Right ventricle myocardium inferior (tissue), 1 donor: ENCODE measurements at regions of chr2 and their contacts with region 1.

Region 1: GRCh38 chr2:47906157-47907038 is at the start of gene FBXO11:
- DNase-seq: peak; percentile 97
- ATAC-seq: peak; percentile 97
- total RNA-seq, gene FBXO11: 35.6 TPM

Region 2: DNA sequence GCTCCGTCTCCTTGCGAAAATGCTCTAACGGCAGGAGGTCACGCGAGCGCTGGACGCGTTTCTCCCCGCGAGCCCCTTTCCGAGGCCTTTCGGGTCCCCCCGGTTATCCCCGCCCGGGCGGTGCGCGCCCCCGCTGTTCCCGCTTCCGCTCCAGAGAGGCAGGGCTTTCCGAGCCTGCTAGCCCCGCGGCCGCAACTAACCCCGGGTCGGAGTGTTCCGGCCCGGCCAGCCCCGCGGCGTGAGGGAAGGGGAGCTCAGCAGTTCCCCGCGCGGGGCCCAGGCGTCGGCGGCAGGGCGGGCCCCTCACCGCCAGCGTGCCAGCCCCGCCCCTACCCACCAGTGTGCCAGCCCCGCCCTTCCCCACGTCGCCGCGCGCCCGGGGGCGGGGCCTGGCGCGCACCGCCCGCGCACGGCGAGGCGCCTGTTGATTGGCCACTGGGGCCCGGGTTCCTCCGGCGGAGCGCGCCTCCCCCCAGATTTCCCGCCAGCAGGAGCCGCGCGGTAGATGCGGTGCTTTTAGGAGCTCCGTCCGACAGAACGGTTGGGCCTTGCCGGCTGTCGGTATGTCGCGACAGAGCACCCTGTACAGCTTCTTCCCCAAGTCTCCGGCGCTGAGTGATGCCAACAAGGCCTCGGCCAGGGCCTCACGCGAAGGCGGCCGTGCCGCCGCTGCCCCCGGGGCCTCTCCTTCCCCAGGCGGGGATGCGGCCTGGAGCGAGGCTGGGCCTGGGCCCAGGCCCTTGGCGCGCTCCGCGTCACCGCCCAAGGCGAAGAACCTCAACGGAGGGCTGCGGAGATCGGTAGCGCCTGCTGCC is 123.5 kb before region 1 on chr2 and contains the start of gene MSH6:
- intact Hi-C with region 1: loop called (anchors 2 kb)
- DNase-seq: peak; percentile 94
- ATAC-seq: peak; percentile 98
- total RNA-seq, gene MSH6: 25.4 TPM

Region 3: DNA sequence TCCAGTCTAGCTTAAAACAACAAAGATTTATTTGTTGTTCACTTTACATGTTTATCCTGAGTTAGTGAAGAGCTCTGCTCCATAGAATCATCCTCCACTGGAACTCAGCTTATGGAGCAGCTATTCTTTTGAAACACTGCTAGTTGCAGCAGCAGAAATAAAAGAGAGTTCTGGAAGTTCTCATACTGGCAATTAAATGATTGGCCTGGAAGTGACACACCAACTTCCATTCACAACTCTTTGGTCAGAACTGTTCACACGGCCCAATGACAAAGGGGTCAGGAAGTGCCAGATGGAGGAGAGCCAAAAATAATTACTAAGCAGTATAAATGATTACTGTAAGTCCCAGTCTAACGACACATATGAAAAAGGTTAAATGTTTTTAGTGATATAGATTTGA is 39.2 kb before region 1 on chr2:
- intact Hi-C with region 1: loop called (anchors 5 kb)
- DNase-seq: no peak
- ATAC-seq: peak; percentile 88

Region 4: DNA sequence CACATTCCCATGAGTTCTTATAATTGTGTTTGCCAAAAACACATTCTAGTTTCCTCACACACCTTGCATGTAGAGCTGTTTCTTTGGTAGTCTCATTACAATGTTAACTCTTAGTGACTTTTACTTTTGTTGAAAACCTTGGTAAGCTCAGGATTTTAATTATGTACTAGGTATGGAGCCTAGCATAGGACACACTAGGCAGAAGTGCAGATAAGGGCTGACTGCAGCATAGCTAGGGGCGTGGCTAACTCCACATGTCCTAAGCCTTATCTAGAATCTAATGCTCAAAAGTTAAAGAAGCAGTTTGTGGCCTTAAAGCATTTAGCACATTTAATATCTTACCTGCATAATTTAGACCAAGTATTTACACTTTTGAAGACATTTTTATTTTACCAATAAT is 153.6 kb after region 1 on chr2:
- intact Hi-C with region 1: no loop called
- DNase-seq: no peak
- ATAC-seq: no peak